Dendritic cell treated with granulocyte-macrophage colony-stimulating factor and Interleukin-4, amounts not matched to agents 40 ng/mL and 50 ng/mL, for 4 days (primary cell): ENCODE measurements at regions of chr22 and their contacts with region 1.

Region 1: GRCh38 chr22:50627642-50628542 is at the start of gene ARSA:
- H3K4me3 Mint-ChIP-seq: peak within 1 kb of the TSS; percentile 73
- H3K27ac Mint-ChIP-seq: peak within 1 kb of the TSS; percentile 87
- H3K4me1 Mint-ChIP-seq: peaks cover 35% of the 10 kb centered on the region
- H3K27me3 Mint-ChIP-seq: peaks cover 1% of the 10 kb centered on the region

Region 2: DNA sequence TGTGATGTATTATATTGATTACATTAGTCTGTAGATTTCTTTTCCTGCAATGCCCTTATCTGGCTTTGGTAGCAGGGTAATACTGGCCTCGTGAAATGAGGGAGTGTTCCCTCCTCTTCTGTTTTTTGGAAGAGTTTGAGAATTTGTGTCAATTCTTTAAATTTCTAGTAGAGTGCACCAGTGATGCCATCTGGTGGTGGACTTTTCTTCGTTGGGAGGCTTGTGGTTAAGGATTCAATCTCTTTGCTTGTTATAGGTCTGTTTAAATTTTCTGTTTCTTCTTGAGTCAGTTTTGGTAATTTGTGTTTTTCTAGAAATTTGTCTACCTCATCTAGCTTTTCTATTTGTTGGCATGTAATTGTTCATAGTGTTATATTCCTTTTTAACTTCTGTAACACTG is 63.6 kb after region 1 on chr22:
- intact Hi-C with region 1: loop called (anchors 5 kb)
- H3K4me3 Mint-ChIP-seq: no peak overlapping the region
- H3K27ac Mint-ChIP-seq: peak overlapping the region; percentile 20
- H3K4me1 Mint-ChIP-seq: peaks cover 37% of the 10 kb centered on the region
- H3K27me3 Mint-ChIP-seq: peaks cover 2% of the 10 kb centered on the region